AG04449 (cell line): ENCODE measurements at regions of chr1 and their contacts with region 1.

Region 1: GRCh38 chr1:11784993-11785769 is 20.6 kb downstream of the MTHFR start:
- DNase-seq: no peak
- H3K4me3 ChIP-seq: peak overlapping the region; percentile 39
- CTCF ChIP-seq: peak; percentile 84

Region 2: DNA sequence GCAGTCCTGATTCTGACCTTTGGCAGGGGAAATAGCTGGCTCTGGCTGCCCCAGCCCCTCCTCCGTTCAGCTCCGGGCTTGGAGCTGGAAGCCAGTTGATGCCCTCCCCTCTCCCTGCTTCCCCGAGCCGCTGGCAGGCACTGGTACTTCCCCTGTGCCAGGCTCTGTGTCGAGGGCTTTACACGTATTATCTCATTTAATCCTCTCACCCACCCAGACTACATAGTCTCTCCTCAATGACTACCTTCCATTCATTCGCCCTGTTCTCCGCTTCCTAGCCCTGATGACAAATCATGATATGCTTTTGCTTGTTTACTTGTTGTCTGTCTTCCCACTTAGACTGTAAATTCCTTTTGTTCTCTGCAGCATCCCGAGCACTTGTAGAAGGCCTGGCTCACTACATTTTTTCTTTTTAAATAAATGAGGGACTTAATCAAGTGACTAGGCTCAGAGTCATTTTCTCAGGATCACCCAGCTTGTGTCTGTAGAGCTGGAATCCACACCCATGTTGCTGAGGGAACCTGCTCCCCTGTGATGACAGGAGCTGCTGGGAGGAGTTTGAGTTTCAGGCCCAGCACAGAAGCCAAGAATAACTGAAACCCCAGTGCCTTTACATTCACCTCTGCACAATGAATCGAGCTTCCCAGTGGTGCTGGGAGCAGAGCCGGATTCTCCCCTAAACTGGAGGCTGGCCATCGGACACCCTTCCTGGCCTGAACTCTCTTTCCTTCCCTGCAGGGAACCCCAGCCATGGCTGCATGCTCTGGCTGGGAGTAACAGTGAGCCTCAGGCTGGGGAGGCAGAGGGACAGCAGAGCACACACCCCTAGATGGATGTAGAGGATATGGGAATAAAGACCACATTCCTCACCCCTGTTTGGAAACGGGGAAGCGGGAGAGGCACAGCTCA is 453.9 kb before region 1 on chr1:
- CTCF ChIA-PET with region 1: no interaction called
- POLR2A ChIA-PET with region 1: no interaction called
- DNase-seq: no peak
- H3K4me3 ChIP-seq: no peak overlapping the region
- CTCF ChIP-seq: no peak

Region 3: GRCh38 chr1:11761988-11762406 is 23.2 kb before region 1 on chr1 and contains the start of gene C1orf167:
- CTCF ChIA-PET with region 1: no interaction called
- POLR2A ChIA-PET with region 1: no interaction called
- DNase-seq: no peak
- H3K4me3 ChIP-seq: no peak within 1 kb of the TSS
- CTCF ChIP-seq: no peak

Region 4: DNA sequence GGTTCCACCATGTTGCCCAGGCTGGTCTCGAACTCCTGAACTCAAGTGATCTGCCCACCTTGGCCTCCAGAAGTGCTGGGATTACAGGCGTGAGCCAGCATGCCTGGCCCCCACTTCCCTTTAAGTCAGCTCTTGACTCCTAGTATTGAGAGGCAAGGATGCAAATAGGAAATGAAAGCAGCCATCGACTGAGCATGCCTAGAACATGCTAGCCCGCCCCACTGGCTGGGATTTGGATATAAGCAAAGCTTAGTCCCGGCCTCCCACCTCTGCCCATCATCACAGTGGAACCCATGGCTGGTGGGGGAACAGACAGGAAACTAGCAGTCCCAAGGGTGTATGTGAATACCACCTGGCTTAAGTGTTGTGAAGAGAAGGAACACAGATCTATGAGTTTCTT is 12.7 kb before region 1 on chr1:
- CTCF ChIA-PET with region 1: interaction called, 13 read pairs
- POLR2A ChIA-PET with region 1: no interaction called
- DNase-seq: no peak
- H3K4me3 ChIP-seq: no peak overlapping the region
- CTCF ChIP-seq: no peak

Region 5: GRCh38 chr1:11805447-11806306 is 20.5 kb after region 1 on chr1 and contains the starts of genes CLCN6 and MTHFR:
- CTCF ChIA-PET with region 1: interaction called, 18 read pairs
- POLR2A ChIA-PET with region 1: interaction called, 9 read pairs
- DNase-seq: peak; percentile 91
- H3K4me3 ChIP-seq: peak within 1 kb of the TSS; percentile 95
- CTCF ChIP-seq: no peak